ENCODE measurements at regions of chr17 and their contacts with region 1.

Region 1: DNA sequence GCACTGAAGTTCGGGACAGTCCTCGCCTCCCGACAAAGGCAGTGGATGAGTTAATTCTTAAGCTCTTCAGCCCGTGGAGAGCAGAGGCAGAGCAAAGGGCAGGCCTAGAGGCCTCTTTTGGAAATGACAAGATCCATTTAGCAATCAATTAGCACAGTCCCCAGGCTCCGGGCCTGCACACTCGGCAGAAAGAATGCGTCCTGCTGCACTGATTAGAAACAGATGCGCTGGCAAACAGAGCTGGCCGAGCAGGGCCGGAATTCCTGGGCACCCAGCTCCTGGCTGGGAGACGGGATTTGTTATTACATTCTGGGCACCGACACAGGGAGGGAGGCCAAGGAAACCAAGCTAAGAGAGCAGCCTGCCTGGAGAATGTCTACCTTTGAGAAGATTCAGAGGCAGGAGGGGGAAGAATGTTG is 162.9 kb downstream of the COPRS start:
- DNase-seq: peak; percentile 81 to 82
- ATAC-seq: peak; percentile 91 to 97 (median 93)
- H3K4me3 ChIP-seq: no peak overlapping the region
- H3K27ac ChIP-seq: peak overlapping the region in 9 of 10 donors; percentile 41 to 88 (median 75)
- H3K4me1 ChIP-seq: peaks cover 8 to 59% (median 51%) of the 10 kb centered on the region in 9 donors
- H3K27me3 ChIP-seq: no peaks in the 10 kb centered on the region
- CTCF ChIP-seq: peak in 5 of 9 donors; percentile 23 to 33 (median 30)

Region 2: GRCh38 chr17:31549525-31550388 is 146.4 kb before region 1 on chr17:
- intact Hi-C with region 1: loop called in 1 of 10 experiments (anchors 10 kb)
- DNase-seq: peak; percentile 91 to 93
- ATAC-seq: peak; percentile 93 to 98 (median 96)
- H3K4me3 ChIP-seq: peak overlapping the region; percentile 55 to 93 (median 80)
- H3K27ac ChIP-seq: peak overlapping the region; percentile 83 to 98 (median 94)
- H3K4me1 ChIP-seq: peaks cover 0 to 19% (median 8%) of the 10 kb centered on the region in 9 donors
- H3K27me3 ChIP-seq: no peaks in the 10 kb centered on the region
- CTCF ChIP-seq: peak in 1 of 9 donors; percentile 4

Region 3: GRCh38 chr17:31570951-31571892 is 125.0 kb before region 1 on chr17:
- intact Hi-C with region 1: loop called in 4 of 10 experiments (anchors 10 kb)
- DNase-seq: peak; percentile 82 to 86
- ATAC-seq: peak; percentile 65 to 92 (median 87)
- H3K4me3 ChIP-seq: peak overlapping the region in 1 of 10 donors; percentile 1
- H3K27ac ChIP-seq: peak overlapping the region; percentile 38 to 89 (median 76)
- H3K4me1 ChIP-seq: peaks cover 6 to 76% (median 73%) of the 10 kb centered on the region in 9 donors
- H3K27me3 ChIP-seq: no peaks in the 10 kb centered on the region
- CTCF ChIP-seq: no peak

Region 4: DNA sequence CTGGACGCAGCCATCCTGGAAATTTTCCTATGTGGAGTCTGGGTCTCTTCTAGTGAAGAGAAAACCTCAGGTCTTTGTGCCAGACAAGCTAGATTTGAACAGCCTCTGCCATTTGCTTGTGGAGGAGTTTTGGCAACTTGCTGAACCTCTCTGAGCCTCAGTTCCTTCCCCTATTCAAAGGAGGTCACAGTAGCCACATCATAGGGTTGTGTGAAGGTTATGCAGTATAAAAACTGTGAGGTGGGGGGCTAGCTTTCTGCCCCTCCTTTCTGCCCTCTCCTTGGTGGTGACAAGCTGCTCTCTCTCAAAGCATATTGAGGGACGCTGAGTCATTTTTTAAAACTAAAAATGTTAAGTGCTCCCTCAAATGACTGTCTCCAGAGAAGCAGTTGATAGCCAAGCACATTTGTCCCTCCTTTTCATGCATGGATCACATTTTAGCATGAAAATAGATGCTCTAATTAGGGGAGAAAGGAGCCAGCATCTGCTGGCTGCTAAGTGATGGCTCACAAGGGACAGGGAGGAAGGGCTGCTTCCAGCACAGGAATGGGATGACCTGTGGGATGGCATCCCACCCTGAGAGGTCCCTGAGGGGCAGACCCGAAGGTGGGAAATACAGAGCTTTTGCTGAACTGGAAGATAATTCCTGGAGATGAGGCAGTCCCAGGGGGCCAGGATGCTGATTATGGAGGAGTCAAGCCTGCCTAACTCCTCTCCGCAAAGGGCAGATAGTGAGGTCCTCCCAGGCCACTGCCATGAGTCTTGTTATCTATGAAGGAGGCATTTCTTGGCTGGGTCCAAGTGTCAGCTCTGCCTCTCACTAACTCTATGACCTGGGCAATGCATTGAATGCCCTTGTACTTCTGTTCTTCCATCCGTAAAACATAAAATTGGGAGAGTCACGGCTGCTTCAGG is 85.9 kb before region 1 on chr17:
- intact Hi-C with region 1: loop called in 1 of 10 experiments (anchors 10 kb)
- DNase-seq: no peak
- ATAC-seq: no peak
- H3K4me3 ChIP-seq: no peak overlapping the region
- H3K27ac ChIP-seq: no peak overlapping the region
- H3K4me1 ChIP-seq: peaks cover 0 to 3% (median 0%) of the 10 kb centered on the region in 9 donors
- H3K27me3 ChIP-seq: no peaks in the 10 kb centered on the region
- CTCF ChIP-seq: no peak

Region 5: GRCh38 chr17:31722251-31723056 is 26.3 kb after region 1 on chr17:
- intact Hi-C with region 1: loop called in 2 of 10 experiments (anchors 1 kb)
- DNase-seq: peak; percentile 21 to 64
- ATAC-seq: peak; percentile 88 to 98 (median 95)
- H3K4me3 ChIP-seq: no peak overlapping the region
- H3K27ac ChIP-seq: peak overlapping the region in 9 of 10 donors; percentile 47 to 88 (median 82)
- H3K4me1 ChIP-seq: peaks cover 13 to 36% (median 27%) of the 10 kb centered on the region in 9 donors
- H3K27me3 ChIP-seq: no peaks in the 10 kb centered on the region
- CTCF ChIP-seq: no peak

Region 6: DNA sequence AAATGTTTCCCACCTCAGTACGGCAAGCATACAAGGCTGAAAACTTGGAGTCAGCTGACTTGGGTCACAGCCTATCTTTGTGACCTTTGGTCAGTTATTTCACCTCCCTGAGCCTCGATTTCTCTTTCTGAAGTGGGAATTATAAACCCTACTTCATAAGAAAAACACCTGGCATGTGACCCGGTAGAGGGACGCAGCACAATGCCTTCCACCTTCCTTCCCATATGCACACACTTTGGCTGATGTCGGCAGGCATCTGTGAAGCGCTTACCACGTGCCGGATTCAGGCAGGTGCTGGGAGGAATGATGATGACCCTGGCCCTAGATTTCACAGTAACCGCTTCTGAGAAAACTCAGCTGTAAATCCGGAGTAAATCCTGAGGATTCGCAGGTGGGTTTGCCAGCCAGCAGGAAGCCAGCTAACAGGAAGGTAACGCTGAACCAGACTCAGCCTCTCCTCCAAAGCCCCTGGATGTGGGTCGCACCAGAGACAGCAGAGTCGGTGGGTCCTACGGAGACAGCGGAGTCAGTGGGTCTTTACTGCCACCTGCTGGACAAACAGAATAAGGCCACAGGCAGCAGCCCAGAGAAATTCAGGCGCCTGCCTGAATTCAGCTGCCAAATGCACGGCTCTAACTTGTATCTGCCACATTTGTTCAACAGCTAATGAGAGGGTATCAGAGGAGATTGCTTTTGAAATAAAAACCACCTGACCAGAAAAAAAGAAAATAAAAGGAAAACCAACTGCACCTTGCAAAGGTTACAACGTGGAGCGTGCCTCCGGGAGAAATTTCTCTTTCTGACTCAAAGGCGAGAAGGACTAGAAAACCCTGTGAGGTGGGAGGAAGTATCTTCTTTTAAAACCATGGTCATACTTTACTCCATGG is 146.2 kb after region 1 on chr17:
- intact Hi-C with region 1: loop called in 4 of 10 experiments (anchors 2 to 5 kb)
- DNase-seq: peak; percentile 56 to 70
- ATAC-seq: peak; percentile 84 to 96 (median 92)
- H3K4me3 ChIP-seq: peak overlapping the region in 8 of 10 donors; percentile 9 to 38 (median 31)
- H3K27ac ChIP-seq: peak overlapping the region in 9 of 10 donors; percentile 8 to 57 (median 31)
- H3K4me1 ChIP-seq: peaks cover 8 to 30% (median 18%) of the 10 kb centered on the region in 9 donors
- H3K27me3 ChIP-seq: no peaks in the 10 kb centered on the region
- CTCF ChIP-seq: peak; percentile 92 to 99 (median 97)